ENCODE measurements at regions of chr1 and their contacts with region 1.

Region 1: DNA sequence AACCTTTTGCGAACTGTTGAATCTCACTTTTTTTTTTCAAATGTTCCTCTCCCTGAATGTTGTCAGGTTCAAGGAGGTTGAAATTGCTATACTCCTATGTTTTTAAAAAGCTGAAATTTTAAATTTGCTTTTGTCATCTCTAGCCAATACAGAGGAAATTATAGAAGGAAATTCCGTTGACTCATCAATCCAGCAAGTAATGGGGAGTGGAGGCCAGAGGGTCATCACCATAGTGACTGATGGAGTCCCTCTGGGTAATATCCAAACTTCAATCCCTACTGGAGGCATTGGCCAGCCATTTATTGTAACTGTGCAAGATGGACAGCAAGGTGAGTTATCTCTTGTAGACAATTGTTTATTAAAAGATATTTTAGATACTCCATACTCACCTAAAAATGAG is 36.3 kb downstream of the GABPB2 start:
- DNase-seq: no peak
- H3K4me3 ChIP-seq: no peak overlapping the region
- CTCF ChIP-seq: no peak

Region 2: DNA sequence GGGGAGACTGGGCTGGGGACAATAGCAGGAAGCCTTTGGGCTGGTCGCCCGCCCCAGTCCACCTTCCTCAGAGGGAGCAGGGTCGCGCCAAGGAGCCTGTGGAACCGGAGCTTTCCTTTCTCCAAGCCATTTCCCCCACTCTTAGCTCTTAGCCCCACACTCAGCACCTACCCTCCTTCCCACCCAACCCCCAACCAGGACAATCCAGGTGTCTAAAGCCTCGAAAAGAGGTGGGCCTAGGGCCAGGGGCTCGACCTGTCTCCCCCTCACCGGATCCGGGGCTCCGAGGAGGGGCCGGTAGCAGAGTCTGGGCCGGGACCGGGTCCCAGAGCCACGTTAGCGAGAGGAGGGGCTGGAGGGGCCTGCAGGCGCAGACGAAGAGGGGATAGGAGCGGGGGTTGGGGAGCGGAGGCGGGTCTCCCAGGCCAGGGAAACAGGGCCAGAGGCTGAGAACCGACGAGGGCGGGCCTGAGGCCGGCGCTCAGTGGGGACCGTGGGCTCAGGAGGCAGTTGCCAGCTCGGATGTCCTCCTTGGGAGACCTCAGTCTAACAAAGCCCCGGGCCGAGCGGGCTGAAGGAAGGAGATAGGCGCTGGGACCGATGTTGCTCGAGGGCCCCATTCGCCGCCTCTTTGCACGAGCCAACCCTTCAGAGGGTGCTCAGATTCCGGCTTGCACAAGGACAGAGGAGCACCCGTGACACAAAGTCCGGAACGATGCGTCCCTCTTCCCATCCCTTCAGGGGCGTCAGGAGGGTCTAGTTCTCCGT is 38.6 kb after region 1 on chr1:
- CTCF ChIA-PET with region 1: interaction called, 412 read pairs
- POLR2A ChIA-PET with region 1: interaction called, 3 read pairs
- DNase-seq: no peak
- H3K4me3 ChIP-seq: peak overlapping the region; percentile 80
- CTCF ChIP-seq: no peak

Region 3: GRCh38 chr1:151165738-151166505 is 59.0 kb after region 1 on chr1 and contains the starts of genes LYSMD1 and SCNM1:
- CTCF ChIA-PET with region 1: interaction called, 412 read pairs
- POLR2A ChIA-PET with region 1: no interaction called
- DNase-seq: peak; percentile 95
- H3K4me3 ChIP-seq: peak within 1 kb of the TSS; percentile 99
- CTCF ChIP-seq: no peak

Region 4: GRCh38 chr1:151465026-151465425 is 358.1 kb after region 1 on chr1:
- CTCF ChIA-PET with region 1: no interaction called
- POLR2A ChIA-PET with region 1: no interaction called
- DNase-seq: no peak
- H3K4me3 ChIP-seq: no peak overlapping the region
- CTCF ChIP-seq: no peak